Prostate gland (tissue), 2 donors: ENCODE measurements at regions of chr16 and their contacts with region 1.

Region 1: GRCh38 chr16:19375561-19376158 is 42.0 kb upstream of the TMC5 start:
- DNase-seq: peak; percentile 25
- H3K4me3 ChIP-seq: no peak overlapping the region
- H3K27ac ChIP-seq: no peak overlapping the region
- H3K4me1 ChIP-seq: no peaks in the 10 kb centered on the region
- H3K27me3 ChIP-seq: no peaks in the 10 kb centered on the region
- CTCF ChIP-seq: peak; percentile 78 to 94 (median 89)
- POLR2A ChIP-seq: no peak

Region 2: GRCh38 chr16:18983565-18984424 is 391.9 kb before region 1 on chr16 and contains the start of gene TMC7:
- intact Hi-C with region 1: loop called (anchors 5 kb)
- DNase-seq: peak; percentile 80
- H3K4me3 ChIP-seq: peak within 1 kb of the TSS; percentile 55 to 65
- H3K27ac ChIP-seq: peak within 1 kb of the TSS; percentile 57 to 68
- H3K4me1 ChIP-seq: peaks cover 2% of the 10 kb centered on the region
- H3K27me3 ChIP-seq: no peaks in the 10 kb centered on the region
- CTCF ChIP-seq: peak in 3 of 4 experiments; percentile 82 to 89 (median 87)
- POLR2A ChIP-seq: peak; percentile 31
- total RNA-seq, gene TMC7: 1.6 to 2.9 TPM

Region 3: GRCh38 chr16:19167710-19168370 is 207.8 kb before region 1 on chr16 and contains the start of gene SYT17:
- intact Hi-C with region 1: loop called (anchors 1 kb)
- DNase-seq: peak; percentile 71
- H3K4me3 ChIP-seq: peak within 1 kb of the TSS; percentile 64 to 76
- H3K27ac ChIP-seq: peak within 1 kb of the TSS; percentile 75 to 87
- H3K4me1 ChIP-seq: peaks cover 4% of the 10 kb centered on the region
- H3K27me3 ChIP-seq: no peaks in the 10 kb centered on the region
- CTCF ChIP-seq: peak; percentile 83 to 97 (median 93)
- POLR2A ChIP-seq: peak; percentile 25
- total RNA-seq, gene SYT17: 24.3 to 32.4 TPM

Region 4: DNA sequence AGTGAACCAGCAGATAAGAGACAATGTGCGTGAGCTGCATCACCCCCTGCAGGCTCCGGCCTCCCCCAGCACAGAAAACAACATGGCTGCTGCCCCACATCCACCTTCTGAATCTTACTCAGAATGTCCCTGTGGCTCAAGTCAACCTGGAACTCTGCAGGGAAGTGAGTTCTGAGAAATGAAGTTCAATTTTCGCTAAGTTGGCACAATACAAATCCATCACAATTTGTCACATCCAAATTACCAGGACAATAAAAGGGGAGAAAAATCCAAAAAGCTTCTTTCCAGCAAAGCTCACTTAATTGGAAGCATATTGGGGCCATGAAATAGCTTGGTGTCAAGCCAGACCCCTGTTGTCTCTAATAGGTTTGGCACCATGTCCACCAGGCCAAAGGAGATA is 52.1 kb before region 1 on chr16:
- intact Hi-C with region 1: no loop called
- DNase-seq: no peak
- H3K4me3 ChIP-seq: no peak overlapping the region
- H3K27ac ChIP-seq: no peak overlapping the region
- H3K4me1 ChIP-seq: no peaks in the 10 kb centered on the region
- H3K27me3 ChIP-seq: no peaks in the 10 kb centered on the region
- CTCF ChIP-seq: no peak
- POLR2A ChIP-seq: no peak

Region 5: GRCh38 chr16:19486757-19487330 is 111.2 kb after region 1 on chr16:
- intact Hi-C with region 1: no loop called
- DNase-seq: no peak
- H3K4me3 ChIP-seq: no peak overlapping the region
- H3K27ac ChIP-seq: no peak overlapping the region
- H3K4me1 ChIP-seq: no peaks in the 10 kb centered on the region
- H3K27me3 ChIP-seq: no peaks in the 10 kb centered on the region
- CTCF ChIP-seq: no peak
- POLR2A ChIP-seq: no peak